GM12878 (cell line): ENCODE measurements at regions of chr12 and their contacts with region 1.

Region 1: DNA sequence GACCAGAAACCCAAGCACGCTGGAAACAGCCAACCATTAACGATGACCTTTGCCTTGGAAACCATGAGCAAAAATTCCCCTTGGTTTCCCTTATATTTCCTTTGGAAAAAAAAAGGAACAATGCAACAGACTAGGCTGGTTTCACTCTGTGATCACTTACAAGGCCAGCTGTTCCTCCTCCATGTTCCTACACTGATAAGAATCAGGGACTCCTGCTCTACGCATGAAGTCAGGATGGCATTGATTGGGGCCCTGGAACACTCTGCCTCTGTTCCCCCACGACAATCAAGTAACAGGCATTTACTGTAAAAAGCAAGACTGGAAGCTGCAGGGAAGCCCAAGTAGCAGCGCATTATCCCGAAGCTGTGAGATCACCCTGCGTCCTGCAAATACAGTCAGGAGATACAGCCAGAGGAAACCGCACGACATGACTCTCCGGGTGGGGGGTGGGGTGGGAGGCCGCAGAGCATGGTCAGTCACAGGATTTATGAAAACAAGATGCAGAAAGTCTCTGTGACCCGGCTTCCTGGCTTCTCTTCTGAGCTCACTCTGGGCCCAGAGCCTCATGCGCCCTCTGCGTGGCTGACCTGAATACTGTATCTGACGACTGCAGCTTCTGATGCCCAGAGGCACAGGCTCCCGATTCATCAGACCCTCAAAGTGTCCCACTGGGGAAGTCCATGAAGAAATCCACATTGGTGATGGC is 31.1 kb downstream of the SSH1 start:
- DNase-seq: no peak
- ATAC-seq: peak; percentile 54
- H3K4me3 ChIP-seq: peak overlapping the region; percentile 21; the same call in 1 of the 2 replicates
- H3K27ac ChIP-seq: peak overlapping the region; percentile 60
- H3K4me1 ChIP-seq: peaks cover 81% of the 10 kb centered on the region
- H3K27me3 ChIP-seq: no peaks in the 10 kb centered on the region
- CTCF ChIP-seq: 0 out of 6 replicates have a peak, but pooled peaks of 1 of the 3 experiments have one; percentile 0
- EP300 ChIP-seq: no peak
- POLR2A ChIP-seq: no peak
- RAD21 ChIP-seq: no peak

Region 2: GRCh38 chr12:108570743-108571608 is 255.3 kb before region 1 on chr12:
- CTCF ChIA-PET with region 1: interaction called, 5 read pairs
- POLR2A ChIA-PET with region 1: no interaction called
- RAD21 ChIA-PET with region 1: interaction called, 14 read pairs
- SMC1A ChIA-PET with region 1: interaction called, 4 read pairs
- in situ Hi-C with region 1: no loop called
- intact Hi-C with region 1: no loop called
- DNase-seq: no peak
- ATAC-seq: no peak
- H3K4me3 ChIP-seq: no peak overlapping the region
- H3K27ac ChIP-seq: peak overlapping the region; percentile 100
- H3K4me1 ChIP-seq: peaks cover 89% of the 10 kb centered on the region
- H3K27me3 ChIP-seq: no peaks in the 10 kb centered on the region
- CTCF ChIP-seq: peak; percentile 42 to 53 (median 49); a peak in 4 of 6 replicates
- EP300 ChIP-seq: 0 out of 4 replicates have a peak, but pooled peaks of 1 of the 2 experiments have one; percentile 10
- POLR2A ChIP-seq: no peak
- RAD21 ChIP-seq: peak; percentile 66

Region 3: DNA sequence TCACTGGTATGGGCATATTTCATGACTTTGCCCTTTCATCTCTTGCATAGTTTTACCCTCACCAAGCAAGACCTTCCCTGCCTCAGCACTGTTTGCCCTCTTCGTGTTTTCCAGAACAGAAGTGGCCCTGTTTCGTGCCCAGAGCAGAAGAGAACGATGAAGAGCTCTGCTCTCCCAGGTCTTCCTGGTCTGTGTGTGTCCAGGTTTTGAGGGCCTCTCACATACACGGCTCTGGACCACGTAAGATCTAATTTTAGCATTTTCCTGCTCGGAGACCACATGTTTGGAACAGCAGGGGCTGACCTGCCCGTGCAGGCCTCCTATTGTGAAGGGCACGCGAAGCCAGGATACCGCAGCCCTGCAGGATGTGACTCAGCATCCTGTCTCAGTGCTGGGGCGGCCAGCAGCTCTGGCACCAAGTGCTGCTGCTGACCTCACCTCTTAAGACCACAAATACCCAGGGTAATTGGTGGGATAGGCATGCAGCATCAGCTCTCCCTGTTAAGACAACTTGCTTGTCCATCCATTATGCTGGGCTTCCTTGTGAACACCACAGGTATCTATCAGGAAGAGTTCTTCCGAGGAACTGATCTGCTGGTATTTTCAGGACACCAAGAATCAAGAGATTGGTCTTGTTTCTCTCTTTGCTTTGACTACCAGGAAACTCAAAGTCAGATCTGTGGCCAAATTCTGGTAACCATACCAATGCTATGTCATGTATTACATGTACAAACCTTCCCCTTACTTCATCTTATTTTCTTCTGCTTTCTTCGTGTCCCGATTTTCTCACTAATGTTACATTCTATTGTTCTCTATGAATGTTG is 12.2 kb after region 1 on chr12:
- CTCF ChIA-PET with region 1: interaction called, 19 read pairs
- POLR2A ChIA-PET with region 1: interaction called, 17 read pairs
- RAD21 ChIA-PET with region 1: interaction called, 11 read pairs
- SMC1A ChIA-PET with region 1: interaction called, 20 read pairs
- in situ Hi-C with region 1: no loop called
- intact Hi-C with region 1: no loop called
- DNase-seq: peak; percentile 91
- ATAC-seq: peak; percentile 98
- H3K4me3 ChIP-seq: no peak overlapping the region
- H3K27ac ChIP-seq: peak overlapping the region; percentile 90
- H3K4me1 ChIP-seq: peaks cover 21% of the 10 kb centered on the region
- H3K27me3 ChIP-seq: no peaks in the 10 kb centered on the region
- CTCF ChIP-seq: no peak
- EP300 ChIP-seq: peak; percentile 91 to 93
- POLR2A ChIP-seq: peak; percentile 59; the same call in 1 of the 2 replicates
- RAD21 ChIP-seq: no peak

Region 4: GRCh38 chr12:108856428-108857157 is 30.3 kb after region 1 on chr12:
- CTCF ChIA-PET with region 1: interaction called, 11 read pairs
- POLR2A ChIA-PET with region 1: interaction called, 32 read pairs
- RAD21 ChIA-PET with region 1: interaction called, 65 read pairs
- SMC1A ChIA-PET with region 1: interaction called, 52 read pairs
- in situ Hi-C with region 1: no loop called
- intact Hi-C with region 1: loop called (anchors 2 kb)
- DNase-seq: no peak
- ATAC-seq: peak; percentile 37
- H3K4me3 ChIP-seq: peak overlapping the region; percentile 93
- H3K27ac ChIP-seq: peak overlapping the region; percentile 79
- H3K4me1 ChIP-seq: peaks cover 52% of the 10 kb centered on the region
- H3K27me3 ChIP-seq: no peaks in the 10 kb centered on the region
- CTCF ChIP-seq: peak in 1 of 3 experiments; percentile 5; a peak in 1 of 6 replicates
- EP300 ChIP-seq: peak; percentile 64 to 77; a peak in 3 of 4 replicates
- POLR2A ChIP-seq: no peak
- RAD21 ChIP-seq: no peak